Posterior vena cava (tissue), 2 donors: ENCODE measurements at regions of chr20 and their contacts with region 1.

Region 1: DNA sequence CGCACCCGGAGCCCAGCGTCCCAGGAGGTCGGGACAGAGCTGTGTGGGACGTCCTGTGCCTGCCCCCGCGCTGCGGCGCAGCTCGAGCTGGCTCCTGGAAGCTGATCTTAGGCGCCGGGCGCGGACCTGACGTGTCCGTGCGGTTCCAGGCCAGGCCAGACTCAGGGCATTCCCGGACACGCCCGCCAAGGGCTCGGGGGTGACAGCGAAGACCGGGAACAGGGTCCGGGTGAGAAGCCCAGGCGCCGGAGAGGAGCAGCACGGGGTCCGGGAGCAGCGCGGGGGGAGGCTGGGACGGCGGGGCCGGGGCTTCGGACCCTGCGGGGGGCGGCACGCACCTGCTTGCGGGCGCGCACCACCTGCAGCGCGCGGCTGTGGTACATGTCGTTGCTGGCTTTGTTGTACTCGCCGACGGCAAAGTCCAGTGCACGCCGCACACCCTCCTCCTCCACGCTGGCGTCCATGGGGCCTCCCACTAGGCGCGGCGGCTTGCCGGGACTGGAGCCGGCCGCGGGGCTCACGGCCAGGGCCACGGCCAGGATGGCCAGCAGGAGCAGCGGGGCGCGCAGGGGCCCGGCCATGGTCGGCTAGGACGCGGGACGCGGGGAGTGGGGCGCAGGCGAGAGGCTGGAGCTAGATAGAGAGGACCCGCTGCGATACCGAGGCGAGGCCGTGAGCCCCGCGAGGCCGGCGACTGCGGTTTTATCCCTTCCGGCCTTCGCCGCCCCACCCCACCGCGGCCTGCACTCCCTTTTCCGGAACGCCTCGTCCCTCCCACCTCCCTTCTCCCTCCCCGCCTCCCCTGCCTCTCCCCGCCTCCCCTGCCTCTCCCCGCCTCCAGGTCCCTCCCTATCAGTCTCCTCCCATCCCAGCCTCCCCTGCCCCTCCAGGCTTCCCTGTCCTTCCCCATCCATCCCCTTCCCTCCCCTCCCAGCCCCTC is at the start of gene CST3:
- DNase-seq: peak; percentile 97
- total RNA-seq, gene CST3: 1,234 to 1,451 TPM

Region 2: GRCh38 chr20:23350196-23350903 is 287.2 kb before region 1 on chr20 and contains the start of gene NXT1:
- intact Hi-C with region 1: loop called in 1 of 2 experiments (anchors 10 kb)
- DNase-seq: peak; percentile 99
- total RNA-seq, gene NXT1: 14.6 to 19.1 TPM

Region 3: DNA sequence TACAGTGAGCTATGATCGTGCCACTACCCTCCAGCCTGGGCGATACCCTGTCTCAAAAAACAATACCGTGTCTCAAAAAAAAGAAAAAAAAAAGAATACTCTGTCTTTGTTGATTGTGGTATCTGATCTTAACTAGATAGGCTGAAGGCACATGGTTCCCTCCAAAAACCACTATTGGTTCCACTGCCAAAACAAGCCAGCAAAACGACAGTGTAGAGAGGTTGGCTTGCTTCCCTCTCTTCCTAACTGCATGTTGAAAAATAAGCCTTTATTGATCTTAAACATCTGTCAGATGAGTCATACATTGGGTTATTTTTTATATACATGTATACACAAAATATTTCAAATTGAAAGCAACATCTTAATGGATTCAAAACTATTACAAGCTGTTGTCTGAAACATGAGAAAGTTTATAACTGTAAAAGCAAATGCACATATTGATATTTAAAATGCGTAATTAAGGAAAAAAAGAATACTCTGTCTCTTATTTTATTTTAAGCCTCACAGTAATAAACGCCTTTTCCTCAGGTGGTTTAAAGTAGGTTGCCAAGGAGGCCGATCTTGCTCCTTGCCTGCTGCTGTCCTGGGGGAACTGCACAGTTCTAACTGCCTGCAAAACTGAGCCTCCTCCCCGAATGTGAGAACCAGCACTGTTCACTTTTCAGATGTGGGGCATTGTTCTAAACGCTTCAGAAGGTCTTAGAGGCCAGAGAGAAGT is 1954.7 kb after region 1 on chr20:
- intact Hi-C with region 1: loop called in 1 of 2 experiments (anchors 5 kb)
- DNase-seq: no peak